ENCODE measurements at regions of chr9 and their contacts with region 1.

Region 1: DNA sequence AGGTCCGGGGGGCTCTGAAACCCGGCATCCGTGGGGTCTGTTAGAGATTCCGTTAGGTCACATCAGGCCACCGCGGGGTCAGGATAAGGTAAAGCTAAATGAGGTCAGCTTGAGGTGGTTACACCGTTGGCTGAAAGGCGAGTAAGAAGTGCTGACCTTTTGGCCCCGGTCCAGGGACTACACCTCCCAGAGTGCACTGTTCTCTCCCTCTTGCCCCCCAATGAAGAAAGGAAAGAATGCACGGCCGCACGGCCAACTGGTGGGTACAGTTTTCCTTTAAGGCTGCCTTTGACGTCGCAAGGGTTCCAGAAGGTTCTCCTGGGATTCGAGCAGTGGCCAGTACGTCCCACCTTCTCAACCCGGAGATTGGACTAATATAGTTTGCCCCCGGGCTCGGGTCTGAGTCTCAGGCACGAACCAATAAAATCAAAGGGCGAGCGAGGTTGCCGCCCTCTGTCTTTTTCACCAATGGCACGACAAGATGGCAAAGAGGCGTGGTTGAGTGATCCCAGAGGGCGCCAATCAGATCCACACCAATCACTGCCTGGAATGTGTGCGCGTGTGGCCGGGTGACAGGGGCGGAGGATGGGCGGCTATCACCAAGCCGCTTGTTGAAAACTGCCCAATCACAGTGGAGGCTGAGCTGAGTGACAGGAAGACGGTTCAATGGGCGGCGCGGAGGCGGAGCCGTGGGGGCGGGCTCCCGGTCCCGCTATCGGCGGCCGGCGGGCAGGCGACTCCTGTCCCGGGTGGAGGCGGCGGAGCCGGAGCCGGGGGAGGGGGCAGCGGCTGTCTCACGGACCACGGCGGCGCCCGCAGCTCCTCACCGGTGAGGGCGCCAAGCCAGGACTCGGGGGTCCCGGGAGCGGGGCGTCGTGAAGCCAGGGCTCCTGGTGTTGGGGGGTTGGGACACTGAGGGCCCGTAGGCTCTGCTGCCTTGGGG is at the start of gene DNAJB5:
- DNase-seq: peak; percentile 96
- ATAC-seq: peak; percentile 91
- H3K4me3 Mint-ChIP-seq: peak within 1 kb of the TSS; percentile 97
- H3K27ac Mint-ChIP-seq: peak within 1 kb of the TSS; percentile 92
- H3K4me1 Mint-ChIP-seq: peaks cover 77% of the 10 kb centered on the region
- H3K27me3 Mint-ChIP-seq: peaks cover 2% of the 10 kb centered on the region
- CTCF ChIP-seq: no peak
- total RNA-seq, gene DNAJB5: 5.4 and 6.4 TPM in 2 replicates

Region 2: DNA sequence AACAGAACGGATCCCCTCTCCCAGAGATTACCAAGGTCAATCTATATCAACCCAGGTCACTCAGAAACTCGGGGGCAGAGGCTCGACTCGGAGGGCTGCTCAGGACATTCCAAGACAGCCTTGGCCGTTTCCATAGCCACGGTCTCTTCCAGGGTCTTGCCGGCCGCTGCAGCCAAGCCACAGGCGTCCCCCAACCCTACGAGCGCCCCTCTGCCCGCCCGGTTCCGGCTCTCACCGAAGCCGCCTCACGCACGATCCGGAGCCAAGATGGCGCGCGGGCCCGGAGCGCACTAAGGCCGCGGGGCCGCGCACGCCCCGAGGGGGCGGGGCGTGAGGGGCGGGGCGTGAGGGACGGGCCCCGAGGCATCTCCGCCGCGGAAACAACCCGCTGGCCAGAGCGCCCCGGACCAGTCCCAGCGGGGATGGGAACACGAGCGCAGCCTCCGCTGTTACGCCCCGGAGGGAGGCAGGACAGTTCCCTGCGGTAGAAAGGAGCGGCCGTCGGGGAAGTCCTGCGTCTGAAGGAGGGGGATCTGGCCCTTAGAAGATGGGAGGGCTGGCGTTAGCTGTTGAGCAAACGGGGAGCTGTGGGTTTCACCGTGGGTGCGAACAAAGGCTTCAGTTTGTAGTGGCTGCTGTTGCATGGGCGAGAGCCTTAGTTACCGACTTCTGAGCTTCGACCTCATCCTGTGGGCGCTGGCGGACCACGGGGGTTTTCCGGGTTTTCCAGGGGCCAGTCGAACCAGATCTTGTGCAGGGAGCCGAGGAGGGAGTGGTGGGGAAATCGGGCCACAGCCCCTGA is 377.2 kb before region 1 on chr9 and contains the start of gene RPP25L:
- CTCF ChIA-PET with region 1: no interaction called
- POLR2A ChIA-PET with region 1: no interaction called
- intact Hi-C with region 1: loop called (anchors 5 kb)
- DNase-seq: peak; percentile 90
- ATAC-seq: peak; percentile 96
- H3K4me3 Mint-ChIP-seq: peak within 1 kb of the TSS; percentile 86
- H3K27ac Mint-ChIP-seq: peak within 1 kb of the TSS; percentile 90
- H3K4me1 Mint-ChIP-seq: peaks cover 19% of the 10 kb centered on the region
- H3K27me3 Mint-ChIP-seq: no peaks in the 10 kb centered on the region
- CTCF ChIP-seq: no peak
- total RNA-seq, gene RPP25L: 17.5 and 18.9 TPM in 2 replicates

Region 3: GRCh38 chr9:34899535-34900158 is 89.6 kb before region 1 on chr9:
- CTCF ChIA-PET with region 1: interaction called, 29 read pairs
- POLR2A ChIA-PET with region 1: interaction called, 6 read pairs
- intact Hi-C with region 1: loop called (anchors 1 kb)
- DNase-seq: peak; percentile 66
- ATAC-seq: peak; percentile 99
- H3K4me3 Mint-ChIP-seq: no peak overlapping the region
- H3K27ac Mint-ChIP-seq: no peak overlapping the region
- H3K4me1 Mint-ChIP-seq: no peaks in the 10 kb centered on the region
- H3K27me3 Mint-ChIP-seq: peaks cover 22% of the 10 kb centered on the region
- CTCF ChIP-seq: peak; percentile 22

Region 4: DNA sequence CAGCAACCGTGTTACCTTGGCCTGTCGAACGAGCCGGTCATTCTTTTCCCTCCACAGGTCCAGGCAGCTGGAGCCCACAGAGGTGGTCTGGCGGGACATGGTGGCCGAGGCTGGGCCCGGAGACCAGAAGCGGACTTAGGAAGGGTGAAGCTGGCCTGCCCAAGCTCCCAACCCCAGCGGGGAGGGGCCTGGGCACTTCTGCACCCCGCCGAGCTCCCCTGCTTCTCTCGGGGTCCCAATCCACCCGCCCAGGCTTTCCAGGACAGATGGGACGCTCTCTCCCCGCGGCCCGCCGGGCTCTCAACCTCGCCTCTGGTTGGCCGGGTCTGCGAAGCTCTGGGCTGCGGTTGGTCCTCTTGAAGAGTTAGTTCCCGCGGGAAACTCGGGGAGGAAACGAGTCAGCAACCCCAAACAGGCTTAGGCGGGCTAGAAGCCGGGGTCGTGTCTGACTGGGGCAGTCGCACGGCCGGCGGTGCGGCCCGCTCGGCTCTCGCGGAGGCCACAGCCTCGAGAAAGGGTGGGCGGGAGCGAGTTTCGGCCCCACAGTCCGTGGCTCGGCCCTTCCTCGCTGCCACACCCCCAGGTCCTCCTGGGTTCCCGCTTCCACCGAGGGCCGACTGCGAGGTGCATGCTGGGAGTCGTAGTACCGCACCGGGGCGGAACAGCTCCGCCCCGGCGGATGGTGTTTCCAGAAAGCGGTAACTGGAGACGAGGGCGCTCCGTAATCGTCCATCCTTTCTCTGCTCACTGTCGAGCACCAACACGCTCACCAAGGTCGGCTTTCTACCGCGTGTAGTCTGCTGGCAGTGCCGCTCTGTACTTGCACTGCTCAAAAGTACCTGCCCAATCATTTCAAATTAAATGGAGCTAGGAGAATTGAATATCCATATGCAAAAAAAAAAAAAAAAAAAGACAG is 90.4 kb after region 1 on chr9 and contains the start of gene FANCG:
- CTCF ChIA-PET with region 1: interaction called, 4 read pairs
- POLR2A ChIA-PET with region 1: no interaction called
- intact Hi-C with region 1: loop called (anchors 1 kb)
- DNase-seq: peak; percentile 80
- ATAC-seq: peak; percentile 92
- H3K4me3 Mint-ChIP-seq: peak within 1 kb of the TSS; percentile 88
- H3K27ac Mint-ChIP-seq: peak within 1 kb of the TSS; percentile 74
- H3K4me1 Mint-ChIP-seq: peaks cover 22% of the 10 kb centered on the region
- H3K27me3 Mint-ChIP-seq: no peaks in the 10 kb centered on the region
- CTCF ChIP-seq: no peak
- total RNA-seq, gene FANCG: 27.4 and 28.8 TPM in 2 replicates

Region 5: DNA sequence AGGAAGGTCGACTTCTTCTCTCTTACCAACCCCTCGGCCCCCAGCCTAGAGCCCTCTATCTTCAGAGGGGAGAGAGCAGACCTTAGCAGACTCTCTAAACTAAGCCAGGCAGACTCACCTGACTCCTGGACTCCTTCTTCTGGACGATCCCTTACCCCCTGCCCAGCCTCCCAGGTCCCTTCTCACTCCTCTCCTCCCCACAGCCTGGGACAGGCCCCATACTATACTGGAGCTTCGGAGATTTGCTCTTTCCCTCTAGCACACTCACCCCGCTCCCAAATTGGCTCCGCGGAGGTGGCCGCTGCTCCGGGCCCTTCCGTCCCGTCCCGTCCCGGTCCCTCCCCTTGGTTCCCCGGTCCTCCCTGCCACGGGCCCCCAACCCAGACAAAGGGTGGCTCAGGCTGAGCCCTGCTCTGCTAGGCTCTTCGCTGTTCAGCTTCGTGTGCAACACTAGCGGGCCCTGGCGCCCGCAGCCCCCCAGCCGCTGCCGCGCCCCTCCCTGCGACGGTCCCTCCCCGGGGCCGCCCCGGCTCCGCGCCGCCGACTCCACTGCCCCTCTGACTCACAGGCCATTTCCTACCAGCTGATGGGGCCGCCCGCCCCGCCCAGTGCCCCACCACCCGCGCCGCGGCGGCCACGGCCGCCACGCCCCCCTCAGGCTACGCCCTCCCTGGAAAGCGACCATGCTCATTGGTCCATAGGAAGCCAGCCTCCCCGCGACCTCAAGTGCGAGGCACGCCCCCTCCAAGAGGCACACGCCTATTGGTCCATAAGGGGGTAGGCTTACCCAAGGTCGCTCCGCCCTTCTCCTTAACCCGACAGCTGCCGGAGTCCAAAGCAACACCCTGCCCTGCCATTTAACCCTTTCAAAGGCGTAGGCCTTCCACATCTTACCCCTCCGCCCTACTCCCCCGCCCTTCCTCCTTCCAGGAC is 122.0 kb after region 1 on chr9:
- CTCF ChIA-PET with region 1: no interaction called
- POLR2A ChIA-PET with region 1: no interaction called
- intact Hi-C with region 1: loop called (anchors 1 kb)
- DNase-seq: peak; percentile 86
- ATAC-seq: peak; percentile 81
- H3K4me3 Mint-ChIP-seq: peak overlapping the region; percentile 83
- H3K27ac Mint-ChIP-seq: peak overlapping the region; percentile 88
- H3K4me1 Mint-ChIP-seq: peaks cover 62% of the 10 kb centered on the region
- H3K27me3 Mint-ChIP-seq: no peaks in the 10 kb centered on the region
- CTCF ChIP-seq: no peak

Measured in activated B cell treated with CpG ODN at 0.5 μM for 24 hours (primary cell).